ENCODE measurements at regions of chr2 and their contacts with region 1.

Region 1: DNA sequence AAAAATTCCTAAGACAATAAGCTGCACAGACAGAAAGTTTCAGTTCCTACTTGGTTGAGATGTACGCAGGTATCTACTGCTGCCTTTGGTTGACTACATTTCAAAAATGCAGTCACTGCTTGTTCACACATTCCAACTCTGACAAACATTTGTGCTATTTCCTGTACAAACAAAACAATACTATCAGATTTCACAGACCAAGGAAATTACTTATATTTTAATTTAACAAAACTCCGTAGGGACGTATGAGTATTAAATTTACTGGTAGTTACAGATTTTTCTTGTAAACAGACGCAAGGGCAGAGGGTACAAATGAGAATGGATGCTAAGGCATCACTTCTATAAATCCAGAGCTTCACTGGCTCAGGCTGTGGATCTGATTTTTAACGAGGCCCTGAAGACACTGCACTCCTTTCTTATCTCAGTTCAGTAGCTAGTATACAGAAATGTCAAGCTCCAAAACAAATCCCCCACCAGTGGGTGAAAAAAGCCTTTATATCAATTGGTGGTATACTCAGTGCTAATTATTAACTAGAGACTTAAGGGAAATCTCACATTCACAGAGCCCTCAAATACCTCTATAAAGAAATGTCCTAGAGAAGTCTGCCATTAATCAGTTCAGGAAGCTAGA is 31.7 kb upstream of the TTC32 start:
- DNase-seq: peak; percentile 64
- ATAC-seq: peak; percentile 95
- H3K4me3 ChIP-seq: no peak overlapping the region
- H3K27ac ChIP-seq: peak overlapping the region; percentile 88
- H3K4me1 ChIP-seq: peaks cover 8% of the 10 kb centered on the region
- H3K27me3 ChIP-seq: no peaks in the 10 kb centered on the region
- CTCF ChIP-seq: no peak
- POLR2A ChIP-seq: no peak
- RAD21 ChIP-seq: no peak

Region 2: GRCh38 chr2:20822535-20823490 is 889.3 kb after region 1 on chr2 and contains the start of gene LDAH:
- CTCF ChIA-PET with region 1: no interaction called
- POLR2A ChIA-PET with region 1: no interaction called
- dilution Hi-C with region 1: no loop called
- in situ Hi-C with region 1: no loop called
- intact Hi-C with region 1: loop called (anchors 10 kb)
- DNase-seq: peak; percentile 87
- ATAC-seq: peak; percentile 95
- H3K4me3 ChIP-seq: peak within 1 kb of the TSS; percentile 66
- H3K27ac ChIP-seq: peak within 1 kb of the TSS; percentile 69
- H3K4me1 ChIP-seq: no peaks in the 10 kb centered on the region
- H3K27me3 ChIP-seq: no peaks in the 10 kb centered on the region
- CTCF ChIP-seq: no peak
- POLR2A ChIP-seq: peak; percentile 84
- RAD21 ChIP-seq: no peak
- total RNA-seq, gene LDAH: 22.5 and 31.7 TPM in 2 replicates

Measured in IMR-90 (cell line).